ENCODE measurements at regions of chr5 and their contacts with region 1.

Region 1: DNA sequence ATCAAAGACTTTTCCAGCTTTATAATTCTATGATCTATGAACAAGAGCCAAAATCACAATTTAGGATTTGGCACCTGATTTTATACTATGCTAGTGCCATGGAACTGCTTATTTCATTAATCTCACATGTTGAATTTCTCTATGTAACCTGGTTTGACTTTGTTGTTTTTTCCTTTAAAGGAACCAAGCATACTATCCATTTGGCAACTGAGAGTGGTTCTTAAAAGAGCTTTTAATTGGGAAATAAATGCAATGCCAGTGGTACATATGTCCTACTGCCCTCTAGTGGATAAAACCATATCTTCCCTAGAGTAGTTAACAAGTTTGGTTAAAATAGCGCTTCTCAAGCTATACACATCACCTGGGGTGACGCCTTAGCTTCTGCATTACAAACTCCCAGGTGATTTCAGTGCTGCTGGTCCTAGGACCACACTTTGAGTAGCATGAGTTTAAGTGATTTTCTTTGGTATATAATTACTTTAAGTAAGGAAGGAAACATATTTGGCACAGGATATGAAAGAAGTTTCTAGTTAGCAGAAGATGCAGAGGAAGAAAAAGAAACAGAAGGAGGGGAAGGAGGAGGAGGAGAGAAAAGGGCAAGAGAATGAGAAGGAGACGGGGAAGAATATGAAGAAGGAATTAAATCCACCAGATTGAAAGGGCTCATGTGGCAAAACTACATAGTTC is 56.8 kb downstream of the FGF10 start:
- DNase-seq: no peak
- H3K4me3 ChIP-seq: no peak overlapping the region
- H3K27ac ChIP-seq: no peak overlapping the region
- H3K4me1 ChIP-seq: no peaks in the 10 kb centered on the region
- H3K27me3 ChIP-seq: no peaks in the 10 kb centered on the region
- CTCF ChIP-seq: peak in 2 of 3 experiments; percentile 47 to 70; a peak in 2 of 4 replicates
- EP300 ChIP-seq: no peak
- POLR2A ChIP-seq: no peak
- RAD21 ChIP-seq: peak; percentile 78 to 80

Region 2: DNA sequence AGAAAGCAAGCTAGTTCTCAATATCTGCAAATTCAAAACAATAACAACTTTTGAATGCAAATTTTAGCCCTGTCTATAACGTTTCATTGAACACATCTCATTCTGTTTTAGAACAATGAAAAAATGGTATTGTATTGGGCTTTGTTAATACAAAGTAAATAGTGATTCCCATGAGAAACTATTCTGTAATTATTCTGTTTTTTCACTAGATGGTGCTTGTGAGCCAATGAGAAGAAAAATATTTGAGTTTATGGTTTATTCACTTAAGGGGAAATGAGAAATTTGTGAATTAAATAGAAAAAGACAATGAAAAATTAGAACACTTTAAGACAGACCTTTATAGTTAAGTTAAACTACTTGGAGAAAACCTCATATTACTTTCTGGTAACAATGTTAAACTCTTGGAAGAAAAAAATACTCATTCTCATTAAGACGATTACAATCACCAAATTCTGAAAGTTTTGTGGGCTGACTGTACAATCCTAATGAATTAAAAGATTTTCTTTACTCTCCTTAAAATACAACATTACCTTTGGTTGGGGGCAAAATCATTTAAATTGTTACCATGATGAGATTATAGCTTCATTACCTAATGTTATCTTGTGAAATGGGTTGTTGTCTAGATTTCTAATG is 602.5 kb before region 1 on chr5:
- CTCF ChIA-PET with region 1: interaction called, 19 read pairs
- POLR2A ChIA-PET with region 1: no interaction called
- DNase-seq: no peak
- H3K4me3 ChIP-seq: no peak overlapping the region
- H3K27ac ChIP-seq: no peak overlapping the region
- H3K4me1 ChIP-seq: no peaks in the 10 kb centered on the region; a peak in 1 of 7 replicates
- H3K27me3 ChIP-seq: no peaks in the 10 kb centered on the region
- CTCF ChIP-seq: peak in 2 of 3 experiments; percentile 8 to 31; a peak in 2 of 4 replicates
- EP300 ChIP-seq: no peak
- POLR2A ChIP-seq: no peak
- RAD21 ChIP-seq: peak in 1 of 2 experiments; percentile 65; a peak in 3 of 4 replicates

Region 3: DNA sequence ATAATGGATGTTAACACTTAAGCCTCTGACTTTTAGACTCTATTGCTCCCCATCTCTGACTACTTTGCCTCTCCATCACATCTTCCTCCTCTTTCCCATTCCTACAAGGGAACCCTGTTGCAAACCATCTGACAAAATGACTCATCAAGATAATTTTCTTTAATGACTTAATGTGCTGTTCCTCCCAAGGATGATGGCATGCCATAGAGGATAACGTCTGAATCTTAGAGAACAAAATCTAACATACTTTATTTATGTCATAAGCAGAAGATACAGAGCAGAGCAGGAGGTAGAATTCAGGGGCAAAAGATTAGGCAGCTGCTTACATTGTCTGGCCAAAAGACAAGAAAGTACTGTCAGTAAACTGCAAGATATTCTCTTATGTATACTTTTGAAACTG is 20.1 kb before region 1 on chr5:
- CTCF ChIA-PET with region 1: interaction called, 13 read pairs
- POLR2A ChIA-PET with region 1: no interaction called
- DNase-seq: no peak
- H3K4me3 ChIP-seq: no peak overlapping the region
- H3K27ac ChIP-seq: no peak overlapping the region
- H3K4me1 ChIP-seq: no peaks in the 10 kb centered on the region
- H3K27me3 ChIP-seq: no peaks in the 10 kb centered on the region
- CTCF ChIP-seq: no peak
- EP300 ChIP-seq: no peak
- POLR2A ChIP-seq: no peak
- RAD21 ChIP-seq: no peak

Region 4: DNA sequence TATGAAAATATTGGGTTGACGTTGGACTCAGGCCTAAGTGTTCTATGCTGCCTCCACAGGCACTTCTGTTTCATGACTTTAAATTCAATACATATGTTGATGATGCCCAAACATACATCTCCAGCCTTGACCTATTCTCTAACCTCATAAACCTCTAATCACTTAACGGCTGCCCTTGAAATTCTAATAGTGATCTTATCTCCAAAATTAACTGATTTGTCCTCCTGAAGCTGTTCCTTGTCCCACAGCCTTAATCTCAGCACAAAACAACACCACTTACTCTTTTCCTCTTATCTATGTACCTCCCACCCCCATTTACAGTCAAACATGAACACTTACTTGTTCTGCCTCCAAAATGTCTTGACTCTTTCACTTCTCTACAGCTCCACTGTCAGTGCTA is 13.4 kb after region 1 on chr5:
- CTCF ChIA-PET with region 1: interaction called, 13 read pairs
- POLR2A ChIA-PET with region 1: no interaction called
- DNase-seq: no peak
- H3K4me3 ChIP-seq: no peak overlapping the region
- H3K27ac ChIP-seq: no peak overlapping the region
- H3K4me1 ChIP-seq: no peaks in the 10 kb centered on the region
- H3K27me3 ChIP-seq: no peaks in the 10 kb centered on the region
- CTCF ChIP-seq: no peak
- EP300 ChIP-seq: no peak
- POLR2A ChIP-seq: no peak
- RAD21 ChIP-seq: no peak

Region 5: DNA sequence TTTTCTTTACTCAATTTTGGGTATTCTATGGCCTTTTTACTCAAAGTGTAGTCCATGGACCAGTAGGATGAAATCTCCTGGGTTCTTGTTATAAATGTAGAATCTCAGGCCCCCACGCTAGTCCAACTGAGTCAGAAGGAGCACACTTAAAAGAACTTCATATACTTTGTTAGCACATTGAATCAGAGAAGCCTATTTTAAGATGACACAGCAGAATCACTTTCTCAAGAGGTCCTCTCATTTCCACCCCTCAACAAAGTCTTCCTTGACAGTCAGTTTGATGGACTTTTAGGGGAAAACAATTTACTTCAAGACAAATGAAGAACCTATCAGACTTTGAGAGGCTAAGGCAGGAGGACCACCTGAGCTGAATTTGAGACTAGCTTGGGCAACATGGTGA is 94.5 kb after region 1 on chr5:
- CTCF ChIA-PET with region 1: interaction called, 11 read pairs
- POLR2A ChIA-PET with region 1: no interaction called
- DNase-seq: no peak
- H3K4me3 ChIP-seq: no peak overlapping the region
- H3K27ac ChIP-seq: no peak overlapping the region
- H3K4me1 ChIP-seq: no peaks in the 10 kb centered on the region
- H3K27me3 ChIP-seq: no peaks in the 10 kb centered on the region
- CTCF ChIP-seq: no peak
- EP300 ChIP-seq: no peak
- POLR2A ChIP-seq: no peak
- RAD21 ChIP-seq: no peak